Activated CD4-positive, alpha-beta T cell treated with anti-CD3 and anti-CD28 coated beads for 36 hours (primary cell): ENCODE measurements at regions of chr1 and their contacts with region 1.

Region 1: GRCh38 chr1:161159087-161159912 is at the start of gene USP21:
- DNase-seq: peak; percentile 95
- ATAC-seq: peak; percentile 96
- H3K4me3 Mint-ChIP-seq: peak within 1 kb of the TSS; percentile 79
- H3K27ac Mint-ChIP-seq: peak within 1 kb of the TSS; percentile 82
- H3K4me1 Mint-ChIP-seq: peaks cover 50% of the 10 kb centered on the region
- H3K27me3 Mint-ChIP-seq: no peaks in the 10 kb centered on the region
- total RNA-seq, gene USP21: 25.1 to 32.0 TPM

Region 2: DNA sequence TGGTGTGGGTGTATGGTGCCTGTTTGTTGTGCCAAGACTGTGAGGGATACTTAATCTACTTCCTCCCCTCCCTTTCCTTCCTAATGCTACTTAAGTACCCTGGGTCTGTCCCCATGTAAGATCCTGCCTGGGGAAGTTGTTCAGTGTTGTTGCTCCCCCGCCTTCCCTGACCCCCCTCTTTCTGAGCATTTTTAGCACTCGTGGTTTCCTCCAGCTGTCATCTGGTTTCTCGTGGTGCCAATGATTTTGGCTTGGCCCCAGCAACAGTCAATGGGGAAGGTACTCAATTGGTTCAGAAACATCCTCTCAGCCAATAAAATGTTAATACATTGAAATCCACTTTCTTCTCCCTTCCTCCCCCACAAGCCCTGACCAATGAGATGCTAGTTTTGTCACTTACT is 26.0 kb after region 1 on chr1:
- CTCF ChIA-PET with region 1: interaction called, 5 read pairs
- POLR2A ChIA-PET with region 1: interaction called, 10 read pairs
- intact Hi-C with region 1: no loop called
- DNase-seq: peak; percentile 86
- ATAC-seq: peak; percentile 71
- H3K4me3 Mint-ChIP-seq: peak overlapping the region; percentile 50
- H3K27ac Mint-ChIP-seq: peak overlapping the region; percentile 90
- H3K4me1 Mint-ChIP-seq: peaks cover 79% of the 10 kb centered on the region
- H3K27me3 Mint-ChIP-seq: no peaks in the 10 kb centered on the region